HCT116 (cell line): ENCODE measurements at regions of chr6 and their contacts with region 1.

Region 1: GRCh38 chr6:30769088-30769852 is 24.9 kb upstream of the IER3 start:
- DNase-seq: peak; percentile 96
- ATAC-seq: peak; percentile 84
- H3K4me3 ChIP-seq: peak overlapping the region; percentile 15 to 48
- H3K27ac ChIP-seq: peak overlapping the region; percentile 76
- H3K4me1 ChIP-seq: peaks cover 66 to 75% of the 10 kb centered on the region in 2 experiments
- H3K27me3 ChIP-seq: no peaks in the 10 kb centered on the region
- CTCF ChIP-seq: no peak
- POLR2A ChIP-seq: no peak
- RAD21 ChIP-seq: no peak

Region 2: DNA sequence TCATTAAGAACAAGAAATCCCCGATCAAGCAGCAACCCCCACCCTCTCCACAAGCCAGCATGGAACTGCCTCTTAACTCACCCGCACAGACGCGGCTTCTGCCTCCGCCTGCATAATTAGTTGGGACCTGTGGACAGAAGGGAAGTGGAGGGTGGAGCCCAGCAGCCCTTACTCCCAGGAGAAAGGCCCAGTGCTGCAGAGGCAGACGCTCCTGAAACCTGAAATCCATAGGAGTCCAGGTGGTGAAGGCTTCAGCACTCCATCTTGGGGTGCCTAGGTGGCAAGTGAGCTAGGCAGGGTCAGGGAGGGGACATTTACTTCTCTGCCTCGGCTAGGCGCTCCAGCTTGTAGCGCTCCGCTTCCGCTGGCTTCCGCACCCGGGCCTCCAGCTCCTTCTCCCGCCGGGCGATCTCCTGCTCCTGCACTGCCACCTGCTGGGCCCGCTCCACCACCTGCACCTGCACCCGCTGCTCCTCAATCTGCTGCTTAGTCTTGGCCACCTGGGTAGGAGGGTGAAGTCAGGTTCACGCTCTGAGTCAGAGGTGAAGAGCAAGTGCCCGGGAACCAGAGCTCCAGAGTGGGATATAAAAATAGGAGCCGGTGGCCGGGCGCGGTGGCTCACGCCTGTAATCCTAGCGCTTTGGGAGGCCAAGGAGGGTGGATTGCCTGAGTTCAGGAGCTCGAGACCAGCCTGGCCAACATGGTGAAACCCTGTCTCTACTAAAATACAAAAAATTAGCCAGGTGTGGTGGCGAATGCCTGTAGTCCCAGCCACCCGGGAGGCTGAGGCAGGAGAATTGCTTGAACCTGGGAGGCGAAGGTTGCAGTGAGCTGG is 38.5 kb before region 1 on chr6:
- CTCF ChIA-PET with region 1: no interaction called
- POLR2A ChIA-PET with region 1: no interaction called
- RAD21 ChIA-PET with region 1: no interaction called
- intact Hi-C with region 1: no loop called
- DNase-seq: peak; percentile 77
- ATAC-seq: peak; percentile 90
- H3K4me3 ChIP-seq: peak overlapping the region; percentile 41 to 53
- H3K27ac ChIP-seq: peak overlapping the region; percentile 55
- H3K4me1 ChIP-seq: peaks cover 12 to 37% of the 10 kb centered on the region in 2 experiments
- H3K27me3 ChIP-seq: no peaks in the 10 kb centered on the region
- CTCF ChIP-seq: peak; percentile 86 to 91 (median 88)
- POLR2A ChIP-seq: no peak
- RAD21 ChIP-seq: peak; percentile 98

Region 3: DNA sequence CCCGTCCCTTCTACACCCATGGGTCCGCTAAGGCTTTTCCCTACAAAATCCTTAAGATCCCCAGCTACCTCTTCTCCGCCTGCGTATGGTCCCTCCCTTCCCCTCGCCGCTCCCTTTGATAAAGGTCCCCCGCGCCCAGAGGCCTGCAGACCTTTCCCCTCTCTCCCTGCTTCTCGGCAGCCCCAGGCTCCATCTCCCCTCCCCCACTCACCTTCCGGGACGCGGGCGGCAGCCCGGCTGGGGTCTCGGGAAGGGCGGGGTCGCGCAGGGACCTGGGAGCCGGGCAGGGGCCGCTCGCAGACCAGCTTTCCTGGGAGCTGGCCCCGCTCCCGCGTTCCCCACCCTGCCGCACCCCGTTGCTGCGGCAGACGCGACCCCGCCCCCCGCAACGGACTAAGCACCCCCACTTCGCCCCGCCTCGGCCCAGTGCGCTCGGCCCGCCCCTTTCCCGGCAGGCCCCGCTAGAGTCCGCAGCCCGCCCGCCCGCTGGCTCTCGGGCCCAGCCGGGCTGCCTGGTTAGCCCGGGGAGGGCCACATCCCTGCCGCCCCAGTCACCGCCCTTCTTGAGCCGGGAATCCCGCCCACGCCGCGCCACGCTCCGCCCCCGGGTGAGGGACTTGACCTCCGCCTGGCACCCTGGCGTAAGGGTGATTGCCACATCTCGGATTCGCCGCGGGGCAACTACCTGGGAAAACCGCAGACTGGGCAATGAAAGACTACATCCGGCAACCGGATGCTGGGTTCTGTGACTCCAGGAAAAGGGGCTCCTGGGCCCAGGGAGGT is 26.8 kb before region 1 on chr6 and contains the start of gene FLOT1:
- CTCF ChIA-PET with region 1: no interaction called
- POLR2A ChIA-PET with region 1: interaction called, 77 read pairs
- RAD21 ChIA-PET with region 1: interaction called in 1 of 2 experiments, 4 read pairs
- intact Hi-C with region 1: loop called (anchors 1 kb)
- DNase-seq: peak; percentile 94
- ATAC-seq: peak; percentile 70
- H3K4me3 ChIP-seq: peak within 1 kb of the TSS; percentile 79 to 85
- H3K27ac ChIP-seq: peak within 1 kb of the TSS; percentile 93
- H3K4me1 ChIP-seq: peaks cover 37 to 79% of the 10 kb centered on the region in 2 experiments
- H3K27me3 ChIP-seq: no peaks in the 10 kb centered on the region
- CTCF ChIP-seq: no peak
- POLR2A ChIP-seq: peak; percentile 98
- RAD21 ChIP-seq: no peak
- total RNA-seq, gene FLOT1: 117 TPM

Region 4: GRCh38 chr6:30752157-30752927 is 16.9 kb before region 1 on chr6:
- CTCF ChIA-PET with region 1: interaction called, 7 read pairs
- POLR2A ChIA-PET with region 1: interaction called, 195 read pairs
- RAD21 ChIA-PET with region 1: interaction called, 6 read pairs
- intact Hi-C with region 1: loop called (anchors 1 kb)
- DNase-seq: peak; percentile 99
- ATAC-seq: peak; percentile 82
- H3K4me3 ChIP-seq: no peak overlapping the region
- H3K27ac ChIP-seq: peak overlapping the region; percentile 96
- H3K4me1 ChIP-seq: peaks cover 76 to 97% of the 10 kb centered on the region in 2 experiments
- H3K27me3 ChIP-seq: no peaks in the 10 kb centered on the region
- CTCF ChIP-seq: no peak
- POLR2A ChIP-seq: no peak
- RAD21 ChIP-seq: no peak

Region 5: DNA sequence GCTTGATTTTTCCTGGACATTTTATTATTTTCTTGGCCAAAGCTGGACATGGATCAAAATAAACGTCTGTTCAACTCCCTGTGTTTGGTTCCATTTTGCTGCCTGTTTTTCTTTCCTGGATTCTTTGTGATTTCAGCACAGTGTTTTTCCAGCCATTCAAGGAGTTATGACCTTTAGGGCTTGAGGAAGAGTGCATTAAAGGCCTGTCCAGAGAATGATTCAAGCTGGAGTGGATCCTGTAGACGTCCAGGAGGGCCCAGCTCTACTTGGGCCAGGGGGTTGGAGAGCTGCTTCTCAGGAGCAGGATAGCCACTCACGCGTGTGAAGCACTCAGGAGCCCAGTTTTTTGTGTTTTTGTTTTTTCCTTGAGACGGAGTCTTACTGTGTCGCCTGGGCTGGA is 31.6 kb after region 1 on chr6:
- CTCF ChIA-PET with region 1: no interaction called
- POLR2A ChIA-PET with region 1: interaction called, 171 read pairs
- RAD21 ChIA-PET with region 1: no interaction called
- intact Hi-C with region 1: no loop called
- DNase-seq: no peak
- ATAC-seq: no peak
- H3K4me3 ChIP-seq: no peak overlapping the region
- H3K27ac ChIP-seq: no peak overlapping the region
- H3K4me1 ChIP-seq: peaks cover 23 to 40% of the 10 kb centered on the region in 2 experiments; a peak in 3 of 4 replicates
- H3K27me3 ChIP-seq: no peaks in the 10 kb centered on the region
- CTCF ChIP-seq: no peak
- POLR2A ChIP-seq: no peak
- RAD21 ChIP-seq: no peak